ENCODE measurements at regions of chr7 and their contacts with region 1.

Region 1: GRCh38 chr7:80770675-80771081 is 132.2 kb downstream of the CD36 start:
- DNase-seq: no peak
- ATAC-seq: peak; percentile 14
- H3K4me3 ChIP-seq: no peak overlapping the region
- H3K27ac ChIP-seq: no peak overlapping the region
- H3K4me1 ChIP-seq: peaks cover 18% of the 10 kb centered on the region
- H3K27me3 ChIP-seq: no peaks in the 10 kb centered on the region
- CTCF ChIP-seq: no peak

Region 2: GRCh38 chr7:80722616-80723141 is 48.0 kb before region 1 on chr7:
- CTCF ChIA-PET with region 1: no interaction called
- POLR2A ChIA-PET with region 1: no interaction called
- intact Hi-C with region 1: loop called (anchors 2 kb)
- DNase-seq: peak; percentile 98
- ATAC-seq: peak; percentile 98
- H3K4me3 ChIP-seq: peak overlapping the region; percentile 38; the same call in 1 of the 2 replicates
- H3K27ac ChIP-seq: peak overlapping the region; percentile 98
- H3K4me1 ChIP-seq: peaks cover 40% of the 10 kb centered on the region
- H3K27me3 ChIP-seq: no peaks in the 10 kb centered on the region
- CTCF ChIP-seq: no peak

Region 3: DNA sequence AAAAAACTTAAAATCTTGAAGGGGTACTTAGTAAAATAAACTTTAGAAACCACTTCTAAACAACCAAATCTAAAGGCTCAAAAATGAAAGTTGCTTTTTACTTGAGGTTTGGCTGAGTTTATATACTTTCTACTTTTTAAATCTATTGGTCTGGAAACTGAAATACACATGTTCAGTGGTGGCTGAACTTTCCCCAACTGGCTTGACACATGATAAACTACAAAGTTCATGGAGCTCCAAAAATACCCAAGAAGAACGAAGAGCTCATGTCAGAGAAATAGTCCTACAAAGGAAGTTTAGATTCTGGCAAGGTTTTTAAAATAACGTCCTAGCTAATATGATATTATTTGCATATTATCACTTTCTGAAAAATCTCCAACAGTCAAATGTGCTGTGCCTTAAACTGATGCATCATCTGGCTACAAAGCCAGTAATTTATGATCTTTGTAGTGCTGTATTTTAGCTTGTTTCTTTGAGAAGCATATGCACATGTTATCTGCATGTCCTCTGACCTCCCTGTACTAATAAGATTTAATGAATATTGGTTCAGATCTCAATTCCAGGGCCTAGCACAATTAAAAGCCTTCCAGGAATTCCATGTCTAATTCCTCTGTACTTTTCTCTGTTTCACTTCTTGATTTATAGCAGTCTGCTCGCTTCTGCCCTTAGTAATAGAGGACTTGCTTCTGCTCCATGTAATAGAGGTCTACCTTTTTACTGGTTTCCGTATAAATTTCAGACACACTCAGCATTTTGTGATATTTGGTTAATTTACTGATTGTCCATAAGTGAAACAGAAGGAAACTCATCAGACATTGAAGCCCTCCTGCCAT is 120.0 kb after region 1 on chr7:
- CTCF ChIA-PET with region 1: no interaction called
- POLR2A ChIA-PET with region 1: no interaction called
- intact Hi-C with region 1: no loop called
- DNase-seq: no peak
- ATAC-seq: no peak
- H3K4me3 ChIP-seq: no peak overlapping the region
- H3K27ac ChIP-seq: no peak overlapping the region
- H3K4me1 ChIP-seq: no peaks in the 10 kb centered on the region
- H3K27me3 ChIP-seq: no peaks in the 10 kb centered on the region
- CTCF ChIP-seq: no peak

Region 4: GRCh38 chr7:81659697-81660395 is 889.2 kb after region 1 on chr7:
- CTCF ChIA-PET with region 1: no interaction called
- POLR2A ChIA-PET with region 1: interaction called, 10 read pairs
- intact Hi-C with region 1: no loop called
- DNase-seq: no peak
- ATAC-seq: no peak
- H3K4me3 ChIP-seq: no peak overlapping the region
- H3K27ac ChIP-seq: no peak overlapping the region
- H3K4me1 ChIP-seq: no peaks in the 10 kb centered on the region
- H3K27me3 ChIP-seq: no peaks in the 10 kb centered on the region
- CTCF ChIP-seq: no peak

Measured in PC-3 (cell line).